ENCODE measurements at regions of chr7 and their contacts with region 1.

Region 1: GRCh38 chr7:73828107-73828803 is 2.5 kb upstream of the CLDN4 start:
- DNase-seq: peak; percentile 28 to 71 (median 64)
- H3K4me3 ChIP-seq: peak overlapping the region in 1 of 7 experiments; percentile 39
- H3K27ac ChIP-seq: no peak overlapping the region
- H3K4me1 ChIP-seq: peaks cover 5 to 37% (median 32%) of the 10 kb centered on the region in 4 experiments
- H3K27me3 ChIP-seq: peaks cover 0 to 8% (median 4%) of the 10 kb centered on the region in 5 experiments

Region 2: GRCh38 chr7:73746003-73746777 is 82.1 kb before region 1 on chr7:
- CTCF ChIA-PET with region 1: no interaction called
- POLR2A ChIA-PET with region 1: no interaction called
- DNase-seq: no peak
- H3K4me3 ChIP-seq: no peak overlapping the region
- H3K27ac ChIP-seq: no peak overlapping the region
- H3K4me1 ChIP-seq: peaks cover 4 to 19% (median 12%) of the 10 kb centered on the region in 4 experiments
- H3K27me3 ChIP-seq: peaks cover 0 to 8% (median 4%) of the 10 kb centered on the region in 5 experiments

Region 3: DNA sequence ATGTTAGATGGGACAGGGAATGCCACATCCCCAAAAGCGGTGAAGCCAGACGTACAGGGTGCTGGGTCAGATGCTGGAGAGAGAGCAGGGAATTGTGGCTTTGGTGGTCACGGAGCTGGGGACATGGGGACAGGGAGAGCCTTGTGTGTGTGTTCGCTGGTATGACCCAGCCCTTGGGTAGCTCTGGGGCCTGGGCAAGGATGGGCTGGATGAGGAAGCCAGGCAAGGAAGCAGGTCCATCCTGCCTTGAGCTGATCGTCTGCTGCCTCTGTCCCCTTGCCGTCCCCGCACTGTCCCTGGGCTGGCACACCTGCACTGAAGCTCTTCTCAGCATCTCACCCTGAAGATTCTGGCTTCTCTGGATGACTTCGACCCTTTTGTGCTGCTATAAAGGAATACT is 12.8 kb before region 1 on chr7:
- CTCF ChIA-PET with region 1: interaction called, 12 read pairs
- POLR2A ChIA-PET with region 1: no interaction called
- DNase-seq: no peak
- H3K4me3 ChIP-seq: no peak overlapping the region
- H3K27ac ChIP-seq: no peak overlapping the region
- H3K4me1 ChIP-seq: no peaks in the 10 kb centered on the region
- H3K27me3 ChIP-seq: peaks cover 0 to 4% (median 0%) of the 10 kb centered on the region in 5 experiments

Region 4: DNA sequence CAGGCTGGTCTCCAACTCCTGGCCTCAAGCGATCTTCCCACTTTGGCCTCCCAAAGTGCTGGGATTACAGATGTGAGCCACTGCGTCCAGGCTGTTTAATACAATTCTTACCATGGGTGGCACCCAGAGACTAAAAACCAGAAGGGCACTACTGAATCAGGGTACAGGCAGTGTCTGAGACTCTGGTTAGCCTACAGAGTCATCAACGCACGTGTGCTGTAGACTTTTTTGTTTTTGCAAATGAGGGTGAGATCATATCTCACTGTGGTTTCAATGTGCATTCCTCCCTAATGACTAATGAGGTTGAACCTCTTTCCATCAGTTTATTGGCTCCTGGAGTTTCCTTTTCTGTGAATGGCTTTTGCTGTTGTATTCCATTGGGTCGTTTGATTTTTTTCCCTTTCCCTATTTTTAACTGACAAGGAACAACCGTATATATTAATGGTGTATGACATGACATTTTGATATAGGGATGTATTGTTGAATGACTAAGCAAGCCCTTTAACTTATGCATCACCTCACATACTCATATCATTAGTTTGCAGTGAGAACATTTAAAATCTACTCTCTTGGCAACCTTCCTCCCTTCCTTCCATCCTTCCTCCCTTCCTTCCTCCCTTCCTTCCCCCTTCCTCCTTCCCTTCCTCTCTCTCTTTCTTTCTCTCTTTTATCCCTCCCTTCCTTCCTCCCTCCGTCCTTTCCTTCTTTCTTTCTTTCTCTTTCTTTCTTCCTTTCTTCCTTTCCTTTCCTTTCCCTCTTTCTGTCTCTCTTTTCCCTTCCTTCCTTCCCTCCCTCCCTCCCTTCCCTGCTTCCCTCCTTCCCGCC is 23.4 kb after region 1 on chr7:
- CTCF ChIA-PET with region 1: interaction called, 23 read pairs
- POLR2A ChIA-PET with region 1: no interaction called
- DNase-seq: peak; percentile 73 to 92 (median 88)
- H3K4me3 ChIP-seq: no peak overlapping the region
- H3K27ac ChIP-seq: no peak overlapping the region
- H3K4me1 ChIP-seq: peaks cover 0 to 17% (median 9%) of the 10 kb centered on the region in 4 experiments
- H3K27me3 ChIP-seq: peaks cover 0 to 15% (median 9%) of the 10 kb centered on the region in 5 experiments

Region 5: GRCh38 chr7:73856941-73857340 is 28.7 kb after region 1 on chr7:
- CTCF ChIA-PET with region 1: interaction called, 23 read pairs
- POLR2A ChIA-PET with region 1: no interaction called
- DNase-seq: no peak
- H3K4me3 ChIP-seq: no peak overlapping the region
- H3K27ac ChIP-seq: no peak overlapping the region
- H3K4me1 ChIP-seq: peaks cover 0 to 7% (median 5%) of the 10 kb centered on the region in 4 experiments
- H3K27me3 ChIP-seq: peaks cover 0 to 21% (median 9%) of the 10 kb centered on the region in 5 experiments

Measured in common myeloid progenitor, CD34-positive (primary cell).